ENCODE measurements at regions of chr6 and their contacts with region 1.

Region 1: DNA sequence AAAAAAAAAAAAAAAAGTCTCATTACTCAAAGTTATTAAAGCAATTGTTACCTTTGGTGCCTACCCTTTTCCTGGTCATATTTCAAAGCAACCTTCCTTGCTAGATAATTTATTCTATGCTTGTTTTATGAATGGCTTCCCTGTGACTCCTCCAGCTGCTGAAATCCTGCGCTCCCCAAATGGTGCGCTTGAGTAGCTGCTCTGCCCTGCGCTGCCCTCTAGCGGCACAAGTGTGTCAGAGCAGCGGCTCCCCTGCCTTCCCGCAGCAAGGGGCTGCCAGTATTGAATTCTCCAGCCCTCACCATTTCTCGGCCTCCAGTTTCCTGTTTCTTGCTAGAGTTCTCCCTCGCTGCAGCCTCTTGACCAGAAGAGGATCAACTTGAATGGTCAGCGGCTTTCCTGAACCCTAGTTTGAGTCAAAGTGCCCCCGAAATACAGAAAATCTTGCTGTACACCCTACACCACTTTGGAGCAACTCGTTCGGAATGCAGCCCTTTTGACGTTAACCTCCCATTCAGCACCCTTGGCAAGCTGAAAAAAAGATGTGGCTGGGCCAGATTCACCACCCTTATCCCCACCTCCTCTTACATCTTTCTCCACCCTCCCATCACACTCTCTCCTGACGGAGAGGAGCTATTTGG is 60.4 kb upstream of the KLHL31 start:
- DNase-seq: peak; percentile 81
- ATAC-seq: peak; percentile 89
- H3K4me3 Mint-ChIP-seq: no peak overlapping the region
- H3K27ac Mint-ChIP-seq: no peak overlapping the region
- H3K4me1 Mint-ChIP-seq: peaks cover 16% of the 10 kb centered on the region
- H3K27me3 Mint-ChIP-seq: peaks cover 27% of the 10 kb centered on the region

Region 2: DNA sequence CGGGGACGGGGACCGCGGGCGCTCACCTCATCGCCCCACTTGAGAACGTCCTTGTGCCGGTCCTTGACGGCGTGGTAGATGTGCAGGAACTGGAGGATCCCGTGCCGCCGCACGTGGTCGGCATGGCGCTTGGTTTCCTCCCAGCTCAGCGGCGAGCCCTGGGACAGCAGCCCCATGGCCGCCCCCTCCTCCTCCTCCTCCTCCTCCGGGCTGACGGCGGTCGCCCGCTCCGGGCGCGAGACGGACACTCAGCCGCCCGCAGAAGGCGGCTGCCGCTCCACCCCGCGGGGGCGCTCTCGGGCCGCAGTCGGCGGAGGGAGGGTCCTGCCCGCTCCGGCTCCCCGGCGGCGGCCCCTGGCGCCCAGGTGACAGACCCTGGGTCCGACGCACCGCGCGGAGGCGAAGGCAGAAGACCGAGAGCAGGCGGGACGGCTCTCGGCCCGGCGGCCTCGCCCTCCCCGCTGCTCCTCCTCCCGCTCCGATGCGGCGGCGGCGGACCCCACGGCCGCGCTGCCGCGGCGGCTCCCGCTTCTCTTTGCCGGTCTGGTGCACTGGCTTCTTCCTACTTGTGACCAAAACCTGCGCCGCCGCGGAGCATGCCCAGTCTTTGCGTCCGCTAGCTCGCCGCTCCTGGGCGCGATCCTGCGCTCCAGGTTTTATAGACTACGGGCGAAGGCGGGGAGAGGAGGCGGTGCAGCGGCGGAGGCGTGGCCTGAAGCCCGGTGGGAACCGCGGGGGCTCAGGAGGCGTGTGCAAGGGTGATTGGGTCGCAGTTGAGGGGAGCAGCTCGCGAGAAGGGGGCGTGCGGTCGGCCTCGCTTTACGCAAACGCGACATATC is 181.2 kb before region 1 on chr6 and contains the start of gene GCLC:
- CTCF ChIA-PET with region 1: interaction called, 15 read pairs
- POLR2A ChIA-PET with region 1: no interaction called
- DNase-seq: peak; percentile 93
- ATAC-seq: peak; percentile 68
- H3K4me3 Mint-ChIP-seq: peak within 1 kb of the TSS; percentile 89
- H3K27ac Mint-ChIP-seq: peak within 1 kb of the TSS; percentile 96
- H3K4me1 Mint-ChIP-seq: peaks cover 46% of the 10 kb centered on the region
- H3K27me3 Mint-ChIP-seq: peaks cover 17% of the 10 kb centered on the region
- total RNA-seq, gene GCLC: 22.1 to 26.5 TPM

Region 3: DNA sequence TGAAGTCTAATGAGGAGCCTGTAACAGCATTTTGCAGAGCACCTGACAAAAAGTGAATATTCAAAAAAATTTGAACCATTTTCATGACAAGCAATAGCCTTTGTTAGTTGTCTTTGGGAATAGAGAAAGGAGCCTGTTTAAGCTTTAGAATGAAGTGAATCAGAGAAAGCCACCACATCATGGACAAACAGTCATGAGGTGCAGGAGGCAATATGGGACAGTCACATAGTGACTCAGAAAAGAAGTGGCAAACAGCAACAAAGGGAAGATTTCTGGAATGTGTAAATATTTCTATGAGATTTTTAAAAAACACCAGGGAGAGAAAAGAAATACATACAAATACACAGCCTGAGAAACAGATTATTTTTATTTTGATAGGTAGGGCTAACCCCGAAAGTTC is 66.9 kb before region 1 on chr6:
- CTCF ChIA-PET with region 1: interaction called, 12 read pairs
- POLR2A ChIA-PET with region 1: no interaction called
- DNase-seq: no peak
- ATAC-seq: no peak
- H3K4me3 Mint-ChIP-seq: no peak overlapping the region
- H3K27ac Mint-ChIP-seq: no peak overlapping the region
- H3K4me1 Mint-ChIP-seq: no peaks in the 10 kb centered on the region
- H3K27me3 Mint-ChIP-seq: peaks cover 18% of the 10 kb centered on the region

Region 4: GRCh38 chr6:53741034-53741823 is 15.3 kb after region 1 on chr6:
- CTCF ChIA-PET with region 1: interaction called, 48 read pairs
- POLR2A ChIA-PET with region 1: no interaction called
- DNase-seq: peak; percentile 42
- ATAC-seq: peak; percentile 86
- H3K4me3 Mint-ChIP-seq: peak overlapping the region; percentile 56
- H3K27ac Mint-ChIP-seq: peak overlapping the region; percentile 75
- H3K4me1 Mint-ChIP-seq: peaks cover 23% of the 10 kb centered on the region
- H3K27me3 Mint-ChIP-seq: no peaks in the 10 kb centered on the region

Region 5: GRCh38 chr6:53956068-53956711 is 230.3 kb after region 1 on chr6:
- CTCF ChIA-PET with region 1: interaction called, 17 read pairs
- POLR2A ChIA-PET with region 1: no interaction called
- DNase-seq: peak; percentile 35
- ATAC-seq: no peak
- H3K4me3 Mint-ChIP-seq: no peak overlapping the region
- H3K27ac Mint-ChIP-seq: no peak overlapping the region
- H3K4me1 Mint-ChIP-seq: no peaks in the 10 kb centered on the region
- H3K27me3 Mint-ChIP-seq: peaks cover 15% of the 10 kb centered on the region

Measured in activated CD8-positive, alpha-beta T cell treated with anti-CD3 and anti-CD28 coated beads, Interleukin-2, amount 10 ng/mL, durations not matched to agents 7 days and 5 days (primary cell).